ENCODE measurements at regions of chr10 and their contacts with region 1.

Region 1: DNA sequence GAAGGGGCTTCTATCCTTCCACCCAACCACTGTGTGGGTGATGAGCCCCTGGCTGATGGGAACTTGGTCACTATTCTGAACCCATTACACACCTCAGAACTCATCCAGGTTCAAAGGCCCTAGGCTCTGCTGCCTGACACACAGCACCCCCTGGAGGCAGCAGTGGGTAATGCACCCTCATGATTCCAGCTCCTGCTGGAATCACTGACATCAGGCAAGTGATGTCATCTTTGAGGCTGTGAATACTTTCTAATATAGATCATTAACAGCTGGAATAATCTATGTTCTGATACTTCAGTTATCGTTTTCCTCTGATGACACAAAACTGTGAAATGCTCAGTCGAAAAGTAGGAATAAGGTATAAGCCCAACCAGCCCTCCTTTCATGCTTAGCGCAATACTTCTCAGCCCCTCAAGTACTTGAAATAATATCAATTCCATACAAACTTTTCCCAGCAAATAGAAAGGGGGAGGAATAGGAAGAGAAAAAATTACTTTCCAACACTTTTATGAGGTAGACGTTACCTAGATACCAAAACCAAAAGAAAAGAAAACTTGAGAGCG is 7.5 kb upstream of the RBP3 start:
- DNase-seq: peak; percentile 86
- ATAC-seq: peak; percentile 83
- H3K4me3 Mint-ChIP-seq: no peak overlapping the region
- H3K27ac Mint-ChIP-seq: no peak overlapping the region
- H3K4me1 Mint-ChIP-seq: peaks cover 21% of the 10 kb centered on the region
- H3K27me3 Mint-ChIP-seq: no peaks in the 10 kb centered on the region
- CTCF ChIP-seq: peak; percentile 97

Region 2: GRCh38 chr10:47253651-47254375 is 86.9 kb before region 1 on chr10:
- CTCF ChIA-PET with region 1: no interaction called
- POLR2A ChIA-PET with region 1: no interaction called
- DNase-seq: no peak
- ATAC-seq: no peak
- H3K4me3 Mint-ChIP-seq: no peak overlapping the region
- H3K27ac Mint-ChIP-seq: no peak overlapping the region
- H3K4me1 Mint-ChIP-seq: no peaks in the 10 kb centered on the region
- H3K27me3 Mint-ChIP-seq: no peaks in the 10 kb centered on the region
- CTCF ChIP-seq: no peak

Region 3: DNA sequence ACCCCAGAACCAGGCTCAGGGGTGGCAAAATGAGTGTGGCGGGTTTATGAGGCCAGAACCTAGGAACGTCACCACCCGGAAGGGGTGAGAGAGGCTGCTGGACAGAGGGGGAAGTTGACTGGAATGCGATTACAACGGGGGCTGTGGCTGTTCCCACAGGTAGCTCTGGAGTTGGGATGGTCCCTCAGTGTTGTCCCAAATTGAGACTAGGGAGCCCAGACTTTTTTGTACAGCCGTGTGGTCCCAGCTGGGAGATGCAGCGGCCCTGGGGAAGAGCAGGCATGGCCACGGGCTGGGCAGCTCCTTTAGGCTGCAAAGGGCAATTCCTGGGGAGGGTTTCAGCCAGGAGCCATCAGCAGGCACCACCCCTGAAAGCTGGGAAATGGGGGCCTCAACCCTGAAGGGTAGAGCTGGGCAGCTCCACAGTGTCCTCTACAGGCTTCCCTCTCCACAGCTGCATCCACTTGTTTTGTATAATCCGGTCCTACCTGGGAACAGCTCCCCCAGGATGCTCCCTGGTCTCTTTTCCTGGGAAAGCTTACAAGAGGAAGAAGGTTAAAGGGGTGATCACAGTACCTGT is 51.7 kb before region 1 on chr10:
- CTCF ChIA-PET with region 1: no interaction called
- POLR2A ChIA-PET with region 1: no interaction called
- DNase-seq: no peak
- ATAC-seq: peak; percentile 62
- H3K4me3 Mint-ChIP-seq: no peak overlapping the region
- H3K27ac Mint-ChIP-seq: no peak overlapping the region
- H3K4me1 Mint-ChIP-seq: no peaks in the 10 kb centered on the region
- H3K27me3 Mint-ChIP-seq: 0 out of 2 replicates have a peak, but pooled peaks cover 3% of the 10 kb centered on the region
- CTCF ChIP-seq: no peak

Region 4: DNA sequence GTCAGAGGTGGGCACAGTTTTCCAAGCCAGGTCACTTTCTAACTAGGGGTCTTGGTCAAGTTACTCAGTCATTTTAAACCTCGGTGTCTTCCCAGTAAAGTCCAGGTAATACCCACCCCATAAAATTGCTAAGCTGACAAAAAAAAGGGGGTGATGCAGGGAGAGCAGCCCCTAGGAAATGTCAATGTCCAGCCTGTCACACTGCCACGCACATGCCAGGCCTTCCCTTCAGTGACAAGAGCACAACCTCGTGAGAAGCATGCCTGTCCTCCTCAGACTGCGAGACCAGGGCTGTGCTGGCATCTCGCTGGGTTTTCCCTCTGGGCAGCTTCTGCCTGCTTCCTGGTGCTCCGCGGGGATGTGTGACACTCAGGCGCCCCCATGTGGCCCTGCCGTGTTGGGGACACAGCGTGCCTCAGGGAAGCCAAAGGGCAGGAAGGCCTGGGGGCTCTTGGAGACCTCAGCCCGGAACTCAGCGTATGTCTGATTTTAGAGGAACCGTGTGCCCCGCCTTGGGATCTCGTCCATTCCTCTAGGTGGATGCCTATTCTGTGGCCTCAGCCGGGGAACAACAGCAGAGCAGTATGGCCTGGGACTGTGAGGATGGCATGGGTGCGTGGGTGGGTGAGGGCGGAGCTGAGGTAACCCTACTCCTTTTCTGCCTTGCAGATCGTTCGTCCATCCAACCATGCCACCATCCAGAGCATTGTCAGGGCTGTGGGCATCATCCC is 28.6 kb before region 1 on chr10:
- CTCF ChIA-PET with region 1: interaction called, 14 read pairs
- POLR2A ChIA-PET with region 1: no interaction called
- DNase-seq: peak; percentile 89
- ATAC-seq: peak; percentile 87
- H3K4me3 Mint-ChIP-seq: no peak overlapping the region
- H3K27ac Mint-ChIP-seq: no peak overlapping the region
- H3K4me1 Mint-ChIP-seq: peaks cover 25% of the 10 kb centered on the region
- H3K27me3 Mint-ChIP-seq: no peaks in the 10 kb centered on the region
- CTCF ChIP-seq: peak; percentile 62; the same call in 1 of the 2 replicates

Region 5: GRCh38 chr10:47318706-47319105 is 22.0 kb before region 1 on chr10:
- CTCF ChIA-PET with region 1: interaction called, 14 read pairs
- POLR2A ChIA-PET with region 1: no interaction called
- DNase-seq: no peak
- ATAC-seq: peak; percentile 88
- H3K4me3 Mint-ChIP-seq: no peak overlapping the region
- H3K27ac Mint-ChIP-seq: no peak overlapping the region
- H3K4me1 Mint-ChIP-seq: no peaks in the 10 kb centered on the region
- H3K27me3 Mint-ChIP-seq: no peaks in the 10 kb centered on the region
- CTCF ChIP-seq: no peak

Region 6: DNA sequence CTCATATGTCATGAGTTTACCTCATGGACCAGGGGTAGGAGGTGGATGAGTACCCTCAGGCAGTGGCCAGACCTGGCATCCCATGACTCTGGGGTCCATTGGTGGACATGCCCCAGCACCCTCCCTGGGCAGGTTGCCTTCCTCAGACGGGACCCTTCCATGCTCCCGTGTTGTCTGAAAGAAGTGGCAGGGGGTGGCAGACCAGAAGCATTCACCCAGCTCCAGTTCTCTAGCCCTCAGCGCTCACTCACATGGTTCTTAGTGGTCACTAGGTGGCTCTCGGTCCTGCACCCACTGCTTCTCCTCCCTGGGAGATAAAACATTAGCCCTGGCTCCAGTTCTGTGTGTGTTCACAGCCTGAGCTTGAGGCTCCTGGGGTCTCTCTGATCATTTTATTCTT is 13.5 kb after region 1 on chr10:
- CTCF ChIA-PET with region 1: interaction called, 14 read pairs
- POLR2A ChIA-PET with region 1: no interaction called
- DNase-seq: no peak
- ATAC-seq: peak; percentile 45
- H3K4me3 Mint-ChIP-seq: no peak overlapping the region
- H3K27ac Mint-ChIP-seq: no peak overlapping the region
- H3K4me1 Mint-ChIP-seq: no peaks in the 10 kb centered on the region
- H3K27me3 Mint-ChIP-seq: no peaks in the 10 kb centered on the region
- CTCF ChIP-seq: no peak